ENCODE measurements at regions of chr20 and their contacts with region 1.

Region 1: DNA sequence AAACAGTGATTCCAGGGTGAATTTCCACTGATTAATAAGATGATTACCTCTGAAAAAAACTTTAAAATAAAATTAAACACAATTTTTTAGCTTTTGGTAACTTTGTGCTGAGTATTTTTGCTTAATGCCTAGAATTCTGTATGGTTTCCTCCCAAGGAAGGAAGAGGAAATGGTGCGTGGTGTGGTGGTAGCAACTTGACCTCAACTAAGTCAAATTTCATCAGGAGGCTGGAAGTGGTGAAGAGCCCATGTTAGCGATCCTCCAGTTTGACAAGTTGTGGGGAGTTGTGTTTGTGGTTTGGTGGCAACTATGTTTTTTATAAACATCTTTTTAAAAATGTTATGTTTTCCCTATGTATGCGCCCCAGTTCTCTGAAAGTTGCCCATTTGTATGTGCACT is 5.0 kb upstream of the RTF2 start:
- DNase-seq: no peak
- H3K4me3 ChIP-seq: no peak overlapping the region
- H3K27ac ChIP-seq: no peak overlapping the region
- H3K4me1 ChIP-seq: peaks cover 20% of the 10 kb centered on the region
- CTCF ChIP-seq: no peak

Region 2: GRCh38 chr20:56392282-56393137 is 70.9 kb before region 1 on chr20 and contains the start of gene CSTF1:
- CTCF ChIA-PET with region 1: no interaction called
- POLR2A ChIA-PET with region 1: interaction called, 15 read pairs
- intact Hi-C with region 1: loop called (anchors 2 kb)
- DNase-seq: peak; percentile 99
- H3K4me3 ChIP-seq: peak within 1 kb of the TSS; percentile 76
- H3K27ac ChIP-seq: peak within 1 kb of the TSS; percentile 85
- H3K4me1 ChIP-seq: peaks cover 21% of the 10 kb centered on the region
- CTCF ChIP-seq: no peak
- total RNA-seq, gene CSTF1: 38.5 and 52.1 TPM in 2 replicates

Region 3: DNA sequence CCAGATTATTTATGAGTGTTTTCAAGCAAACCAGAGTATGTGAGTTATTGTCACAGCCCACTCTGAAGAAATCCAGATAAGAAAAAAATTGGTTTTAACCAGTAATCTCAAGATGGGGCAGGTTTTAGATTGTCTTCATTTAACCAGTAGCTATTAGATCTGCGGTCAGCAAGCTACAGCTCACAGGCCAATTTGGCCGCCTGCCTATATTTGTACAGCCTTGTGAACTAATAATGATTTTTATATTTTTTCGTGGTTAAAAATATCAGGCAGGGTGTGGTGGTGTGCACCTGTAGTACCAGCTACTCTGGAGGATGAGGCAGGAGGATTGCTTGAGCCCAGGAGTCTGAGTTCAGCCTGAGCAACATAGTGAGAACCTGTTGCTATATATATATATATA is 74.6 kb after region 1 on chr20:
- CTCF ChIA-PET with region 1: no interaction called
- POLR2A ChIA-PET with region 1: no interaction called
- intact Hi-C with region 1: no loop called
- DNase-seq: no peak
- H3K4me3 ChIP-seq: no peak overlapping the region
- H3K27ac ChIP-seq: no peak overlapping the region
- H3K4me1 ChIP-seq: no peaks in the 10 kb centered on the region
- CTCF ChIP-seq: no peak

Measured in OCI-LY7 (cell line).